ENCODE measurements at regions of chr5 and their contacts with region 1.

Region 1: GRCh38 chr5:140169410-140169809 is 5.6 kb upstream of the CYSTM1 start:
- DNase-seq: peak; percentile 12
- H3K4me3 ChIP-seq: no peak overlapping the region
- H3K27ac ChIP-seq: no peak overlapping the region
- H3K4me1 ChIP-seq: peaks cover under 1% of the 10 kb centered on the region
- H3K27me3 ChIP-seq: no peaks in the 10 kb centered on the region
- CTCF ChIP-seq: peak in 1 of 2 donors; percentile 41

Region 2: GRCh38 chr5:139733698-139734538 is 435.5 kb before region 1 on chr5:
- CTCF ChIA-PET with region 1: no interaction called
- dilution Hi-C with region 1: no loop called
- in situ Hi-C with region 1: no loop called
- intact Hi-C with region 1: no loop called
- DNase-seq: peak; percentile 70
- H3K4me3 ChIP-seq: no peak overlapping the region
- H3K27ac ChIP-seq: no peak overlapping the region
- H3K4me1 ChIP-seq: peaks cover 20% of the 10 kb centered on the region
- H3K27me3 ChIP-seq: no peaks in the 10 kb centered on the region
- CTCF ChIP-seq: no peak

Region 3: DNA sequence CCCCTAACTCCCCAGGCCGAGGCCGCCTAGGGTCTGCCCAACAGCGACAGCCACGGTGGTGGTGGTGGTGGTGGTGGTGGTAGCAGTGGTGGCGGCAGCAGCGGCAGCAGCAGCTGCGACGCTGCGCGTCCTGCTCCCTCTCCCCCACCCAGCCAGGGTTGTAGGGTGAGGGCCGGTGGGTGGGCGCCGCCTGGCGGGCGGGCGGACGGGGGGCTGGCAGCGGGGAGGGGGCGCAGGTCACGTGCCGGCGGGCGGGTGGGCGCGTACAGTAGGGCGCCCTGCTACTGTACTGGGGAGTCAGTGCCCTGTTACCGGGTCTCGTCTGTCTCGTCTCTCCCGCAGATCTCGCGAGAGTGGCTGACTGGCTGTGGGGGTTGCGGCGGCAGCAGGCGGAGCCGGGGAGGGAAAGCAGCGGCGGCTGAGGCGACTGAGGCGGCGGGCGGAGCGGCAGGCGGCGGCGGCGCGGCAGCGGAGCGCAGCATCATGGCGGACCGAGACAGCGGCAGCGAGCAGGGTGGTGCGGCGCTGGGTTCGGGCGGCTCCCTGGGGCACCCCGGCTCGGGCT is 55.6 kb before region 1 on chr5 and contains the start of gene PURA:
- CTCF ChIA-PET with region 1: no interaction called
- dilution Hi-C with region 1: no loop called
- in situ Hi-C with region 1: no loop called
- intact Hi-C with region 1: no loop called
- DNase-seq: peak; percentile 92
- H3K4me3 ChIP-seq: peak within 1 kb of the TSS; percentile 69 to 86 (median 82)
- H3K27ac ChIP-seq: peak within 1 kb of the TSS; percentile 49
- H3K4me1 ChIP-seq: peaks cover 24% of the 10 kb centered on the region
- H3K27me3 ChIP-seq: no peaks in the 10 kb centered on the region
- CTCF ChIP-seq: no peak
- total RNA-seq, gene PURA: 10.8 to 15.2 TPM

Region 4: DNA sequence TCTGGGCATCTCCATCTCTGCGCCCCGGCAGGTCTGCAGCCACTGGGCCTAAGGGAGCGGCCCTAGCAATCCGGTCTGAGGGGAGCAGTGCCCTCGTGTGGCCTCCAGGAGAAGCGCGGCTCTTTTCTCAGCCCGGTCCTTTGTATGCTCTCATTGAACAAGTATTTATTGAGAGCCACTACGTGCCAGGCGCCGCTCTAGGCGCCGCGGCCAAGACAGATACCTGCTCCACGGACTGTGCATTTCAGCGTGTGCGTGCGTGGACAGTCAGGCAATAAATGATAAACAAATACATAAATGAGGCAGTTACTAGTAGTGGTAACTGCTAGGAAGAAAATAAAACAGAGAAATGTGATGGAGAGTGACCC is 188.3 kb after region 1 on chr5:
- CTCF ChIA-PET with region 1: interaction called, 6 read pairs
- dilution Hi-C with region 1: no loop called
- in situ Hi-C with region 1: loop called in 1 of 2 experiments (anchors 10 kb)
- intact Hi-C with region 1: loop called (anchors 5 kb)
- DNase-seq: peak; percentile 77
- H3K4me3 ChIP-seq: no peak overlapping the region
- H3K27ac ChIP-seq: peak overlapping the region; percentile 4
- H3K4me1 ChIP-seq: peaks cover 4% of the 10 kb centered on the region
- H3K27me3 ChIP-seq: no peaks in the 10 kb centered on the region
- CTCF ChIP-seq: peak; percentile 81 to 93

Measured in mammary epithelial cell (primary cell).